ENCODE measurements at regions of chr17 and their contacts with region 1.

Region 1: GRCh38 chr17:61635913-61636432 is 45.0 kb upstream of the NACA2 start:
- DNase-seq: no peak
- H3K4me3 ChIP-seq: no peak overlapping the region
- H3K27me3 ChIP-seq: no peaks in the 10 kb centered on the region
- CTCF ChIP-seq: peak; percentile 82

Region 2: GRCh38 chr17:61837175-61838051 is 201.4 kb after region 1 on chr17:
- CTCF ChIA-PET with region 1: interaction called, 33 read pairs
- POLR2A ChIA-PET with region 1: no interaction called
- DNase-seq: peak; percentile 10
- H3K4me3 ChIP-seq: no peak overlapping the region
- H3K27me3 ChIP-seq: no peaks in the 10 kb centered on the region
- CTCF ChIP-seq: peak; percentile 80

Region 3: GRCh38 chr17:61843435-61843834 is 207.5 kb after region 1 on chr17:
- CTCF ChIA-PET with region 1: interaction called, 15 read pairs
- POLR2A ChIA-PET with region 1: no interaction called
- DNase-seq: no peak
- H3K4me3 ChIP-seq: no peak overlapping the region
- H3K27me3 ChIP-seq: no peaks in the 10 kb centered on the region
- CTCF ChIP-seq: no peak